ENCODE measurements at regions of chr6 and their contacts with region 1.

Region 1: GRCh38 chr6:35297601-35298481 is at the start of gene DEF6:
- DNase-seq: peak; percentile 74
- ATAC-seq: peak; percentile 78
- H3K4me3 Mint-ChIP-seq: peak within 1 kb of the TSS; percentile 85
- H3K27ac Mint-ChIP-seq: peak within 1 kb of the TSS; percentile 97
- H3K4me1 Mint-ChIP-seq: peaks cover 56% of the 10 kb centered on the region
- H3K27me3 Mint-ChIP-seq: no peaks in the 10 kb centered on the region
- CTCF ChIP-seq: peak; percentile 42
- total RNA-seq, gene DEF6: 68.7 and 79.9 TPM in 2 replicates

Region 2: GRCh38 chr6:35259194-35259947 is 38.5 kb before region 1 on chr6 and contains the start of gene ZNF76:
- CTCF ChIA-PET with region 1: interaction called, 6 read pairs
- POLR2A ChIA-PET with region 1: no interaction called
- intact Hi-C with region 1: loop called (anchors 2 kb)
- DNase-seq: peak; percentile 89
- ATAC-seq: peak; percentile 81
- H3K4me3 Mint-ChIP-seq: peak within 1 kb of the TSS; percentile 97
- H3K27ac Mint-ChIP-seq: peak within 1 kb of the TSS; percentile 93
- H3K4me1 Mint-ChIP-seq: peaks cover 53% of the 10 kb centered on the region
- H3K27me3 Mint-ChIP-seq: no peaks in the 10 kb centered on the region
- CTCF ChIP-seq: no peak
- total RNA-seq, gene ZNF76: 54.8 and 57.9 TPM in 2 replicates

Region 3: DNA sequence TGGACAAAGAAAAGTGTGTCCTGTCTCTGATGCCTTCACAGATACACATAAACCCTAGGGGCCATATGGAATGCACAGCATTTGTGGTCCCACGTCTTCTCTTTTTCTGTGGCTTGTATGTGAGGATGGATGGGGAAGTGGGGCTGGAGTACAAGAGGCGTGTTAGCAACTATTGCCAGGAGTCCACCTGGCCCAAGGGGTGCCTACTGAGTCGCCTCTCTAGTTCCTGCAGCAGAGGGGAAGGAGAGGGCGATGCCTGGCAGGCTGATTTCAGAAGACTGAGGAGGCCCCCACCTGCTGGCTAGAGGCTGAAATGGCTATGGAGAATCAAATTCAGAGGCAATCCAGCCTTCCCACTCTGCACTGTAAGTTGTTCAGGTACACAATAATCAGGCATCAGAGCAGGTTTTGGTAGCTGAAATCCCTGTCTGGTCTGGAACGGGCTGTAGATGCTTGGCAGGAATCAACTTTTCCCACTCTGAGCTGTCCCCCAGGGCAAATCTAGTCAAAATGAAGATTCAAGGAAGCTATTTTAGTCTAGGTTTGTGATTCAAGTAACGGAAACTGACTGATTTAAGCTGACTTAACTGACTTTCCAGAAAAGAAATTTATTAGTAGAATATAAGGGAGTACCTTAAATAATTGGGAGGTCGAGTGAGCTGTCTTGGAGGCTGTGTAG is 29.6 kb after region 1 on chr6:
- CTCF ChIA-PET with region 1: interaction called, 146 read pairs
- POLR2A ChIA-PET with region 1: interaction called, 11 read pairs
- intact Hi-C with region 1: loop called (anchors 1 kb)
- DNase-seq: peak; percentile 49
- ATAC-seq: peak; percentile 94
- H3K4me3 Mint-ChIP-seq: no peak overlapping the region
- H3K27ac Mint-ChIP-seq: peak overlapping the region; percentile 80
- H3K4me1 Mint-ChIP-seq: peaks cover 15% of the 10 kb centered on the region
- H3K27me3 Mint-ChIP-seq: no peaks in the 10 kb centered on the region
- CTCF ChIP-seq: peak; percentile 19

Region 4: GRCh38 chr6:35452186-35453090 is 154.6 kb after region 1 on chr6 and contains the start of gene FANCE:
- CTCF ChIA-PET with region 1: interaction called, 81 read pairs
- POLR2A ChIA-PET with region 1: interaction called, 14 read pairs
- intact Hi-C with region 1: loop called (anchors 1 kb)
- DNase-seq: peak; percentile 97
- ATAC-seq: peak; percentile 90
- H3K4me3 Mint-ChIP-seq: peak within 1 kb of the TSS; percentile 86
- H3K27ac Mint-ChIP-seq: peak within 1 kb of the TSS; percentile 5
- H3K4me1 Mint-ChIP-seq: peaks cover 27% of the 10 kb centered on the region
- H3K27me3 Mint-ChIP-seq: no peaks in the 10 kb centered on the region
- CTCF ChIP-seq: no peak
- total RNA-seq, gene FANCE: 8.5 and 9.2 TPM in 2 replicates

Region 5: DNA sequence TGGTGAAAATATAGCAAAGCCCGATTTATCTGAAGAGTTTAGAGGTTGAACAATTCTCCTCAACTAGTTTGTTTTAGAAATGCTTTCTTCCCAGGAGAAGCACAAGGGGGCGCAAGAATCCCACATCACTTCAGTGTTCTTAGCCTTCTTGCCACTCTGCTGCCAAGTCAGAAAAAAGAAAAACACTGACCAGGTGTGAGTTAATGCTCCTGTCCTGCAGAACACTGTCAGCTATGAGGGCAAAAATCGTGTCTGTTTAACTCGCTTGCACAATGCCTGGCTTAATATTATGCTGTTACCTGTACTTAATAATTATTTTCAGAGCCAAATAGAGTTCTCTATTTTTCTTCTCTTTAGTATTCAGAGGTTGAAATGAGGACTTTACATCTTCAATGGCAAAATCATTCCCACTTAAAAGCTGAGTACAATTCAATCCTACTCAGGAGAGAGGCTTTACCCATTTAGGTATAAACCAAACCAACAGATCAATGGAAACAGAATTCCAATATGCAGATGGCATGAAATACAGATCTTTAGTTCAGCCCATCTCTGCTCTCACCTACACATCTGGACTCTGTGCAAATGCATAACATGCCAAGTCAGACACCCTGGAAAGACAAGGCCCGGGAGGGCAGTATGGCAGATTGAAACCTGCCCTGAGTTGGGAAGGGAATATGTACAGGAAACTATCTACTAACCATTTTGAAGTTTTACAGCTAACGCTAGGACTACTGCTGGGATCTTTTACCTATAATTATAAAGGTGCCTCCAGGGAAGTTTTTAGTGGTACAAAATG is 286.2 kb after region 1 on chr6:
- CTCF ChIA-PET with region 1: no interaction called
- POLR2A ChIA-PET with region 1: no interaction called
- intact Hi-C with region 1: loop called (anchors 10 kb)
- DNase-seq: peak; percentile 31
- ATAC-seq: peak; percentile 68
- H3K4me3 Mint-ChIP-seq: no peak overlapping the region
- H3K27ac Mint-ChIP-seq: no peak overlapping the region
- H3K4me1 Mint-ChIP-seq: peaks cover 10% of the 10 kb centered on the region
- H3K27me3 Mint-ChIP-seq: no peaks in the 10 kb centered on the region
- CTCF ChIP-seq: peak; percentile 70

Measured in activated B cell treated with CpG ODN at 0.5 μM for 24 hours (primary cell).